ENCODE measurements at regions of chr2 and their contacts with region 1.

Region 1: DNA sequence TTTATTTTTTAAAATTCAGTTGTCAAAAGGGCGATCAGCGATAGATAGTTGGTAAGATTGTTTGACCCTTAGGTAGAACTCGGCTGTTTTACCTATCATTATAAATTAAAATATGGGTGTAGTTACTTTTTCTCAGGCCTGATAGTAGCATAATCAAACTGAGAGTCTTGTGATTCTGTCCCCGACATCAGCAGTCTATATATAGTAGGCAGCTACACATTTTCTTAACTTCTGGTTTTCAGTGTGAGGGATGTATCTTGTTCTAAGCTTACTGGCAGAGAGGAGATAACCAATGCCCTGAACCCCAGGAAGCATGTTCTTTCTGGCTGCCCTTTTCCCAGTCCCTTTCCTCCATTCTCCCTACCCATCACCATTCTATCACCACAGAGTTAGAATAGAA is 56.6 kb downstream of the XRCC5 start:
- DNase-seq: no peak
- ATAC-seq: no peak
- H3K4me3 Mint-ChIP-seq: no peak overlapping the region
- H3K27ac Mint-ChIP-seq: no peak overlapping the region
- H3K4me1 Mint-ChIP-seq: peaks cover 13% of the 10 kb centered on the region
- H3K27me3 Mint-ChIP-seq: no peaks in the 10 kb centered on the region

Region 2: GRCh38 chr2:216006164-216006663 is 159.5 kb before region 1 on chr2:
- CTCF ChIA-PET with region 1: no interaction called
- POLR2A ChIA-PET with region 1: no interaction called
- DNase-seq: peak; percentile 57
- ATAC-seq: peak; percentile 67
- H3K4me3 Mint-ChIP-seq: peak overlapping the region; percentile 37
- H3K27ac Mint-ChIP-seq: peak overlapping the region; percentile 67
- H3K4me1 Mint-ChIP-seq: peaks cover 42% of the 10 kb centered on the region
- H3K27me3 Mint-ChIP-seq: no peaks in the 10 kb centered on the region

Region 3: GRCh38 chr2:216151313-216152030 is 14.2 kb before region 1 on chr2:
- CTCF ChIA-PET with region 1: interaction called, 12 read pairs
- POLR2A ChIA-PET with region 1: no interaction called
- DNase-seq: no peak
- ATAC-seq: no peak
- H3K4me3 Mint-ChIP-seq: no peak overlapping the region
- H3K27ac Mint-ChIP-seq: peak overlapping the region; percentile 14
- H3K4me1 Mint-ChIP-seq: peaks cover 27% of the 10 kb centered on the region
- H3K27me3 Mint-ChIP-seq: no peaks in the 10 kb centered on the region

Region 4: GRCh38 chr2:216195565-216196029 is 29.9 kb after region 1 on chr2:
- CTCF ChIA-PET with region 1: no interaction called
- POLR2A ChIA-PET with region 1: no interaction called
- DNase-seq: no peak
- ATAC-seq: no peak
- H3K4me3 Mint-ChIP-seq: no peak overlapping the region
- H3K27ac Mint-ChIP-seq: no peak overlapping the region
- H3K4me1 Mint-ChIP-seq: peaks cover 14% of the 10 kb centered on the region
- H3K27me3 Mint-ChIP-seq: no peaks in the 10 kb centered on the region

Region 5: GRCh38 chr2:216235462-216235861 is 69.8 kb after region 1 on chr2:
- CTCF ChIA-PET with region 1: no interaction called
- POLR2A ChIA-PET with region 1: no interaction called
- DNase-seq: no peak
- ATAC-seq: no peak
- H3K4me3 Mint-ChIP-seq: no peak overlapping the region
- H3K27ac Mint-ChIP-seq: no peak overlapping the region
- H3K4me1 Mint-ChIP-seq: peaks cover 13% of the 10 kb centered on the region
- H3K27me3 Mint-ChIP-seq: no peaks in the 10 kb centered on the region

Measured in activated CD8-positive, alpha-beta T cell treated with anti-CD3 and anti-CD28 coated beads, Interleukin-2, amount 10 ng/mL, durations not matched to agents 7 days and 5 days (primary cell).